GM12878 (cell line): ENCODE measurements at regions of chr13 and their contacts with region 1.

Region 1: DNA sequence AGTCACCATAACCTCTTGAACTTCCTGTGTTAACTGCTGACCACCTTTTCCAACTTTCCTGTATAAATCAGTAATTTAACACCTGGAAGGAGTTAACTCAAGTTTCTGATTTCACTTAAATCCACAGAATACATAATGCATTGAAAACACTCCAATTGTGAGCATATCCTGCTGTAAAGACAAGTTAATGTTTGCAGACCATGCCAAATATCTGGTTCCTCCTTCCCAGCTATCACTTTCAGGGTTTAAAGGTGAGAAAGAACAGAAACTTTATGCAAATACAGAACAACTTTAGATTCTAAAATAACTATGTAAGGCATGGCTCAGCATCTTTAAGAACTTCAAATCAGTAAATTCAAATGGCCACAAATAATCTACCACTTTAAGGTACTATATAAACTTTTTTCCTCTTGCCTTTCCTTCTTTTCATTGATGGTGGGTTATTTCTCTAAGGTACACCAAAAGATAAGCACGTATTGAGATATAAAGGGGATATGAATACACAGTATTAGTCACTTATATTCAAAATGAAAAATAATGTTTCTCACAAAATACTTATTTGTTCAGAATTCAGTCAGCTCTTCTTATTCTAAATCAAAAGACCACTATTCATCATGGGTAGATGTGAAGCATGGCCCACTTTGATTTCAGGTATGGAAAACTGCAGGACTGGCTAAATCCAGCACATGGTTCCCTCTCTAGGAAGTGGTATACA is 6.6 kb upstream of the TPTE2 start:
- DNase-seq: peak; percentile 67
- ATAC-seq: peak; percentile 71
- H3K4me3 ChIP-seq: peak overlapping the region; percentile 49; the same call in 1 of the 2 replicates
- H3K27ac ChIP-seq: peak overlapping the region; percentile 86
- H3K4me1 ChIP-seq: peaks cover 26% of the 10 kb centered on the region
- H3K27me3 ChIP-seq: no peaks in the 10 kb centered on the region
- CTCF ChIP-seq: no peak
- EP300 ChIP-seq: peak in 1 of 2 experiments; percentile 61; a peak in 1 of 4 replicates
- POLR2A ChIP-seq: no peak
- RAD21 ChIP-seq: no peak

Region 2: GRCh38 chr13:19587635-19588300 is 19.8 kb after region 1 on chr13:
- CTCF ChIA-PET with region 1: interaction called, 38 read pairs
- POLR2A ChIA-PET with region 1: interaction called, 3 read pairs
- RAD21 ChIA-PET with region 1: interaction called, 24 read pairs
- SMC1A ChIA-PET with region 1: interaction called, 51 read pairs
- in situ Hi-C with region 1: no loop called
- intact Hi-C with region 1: no loop called
- DNase-seq: no peak
- ATAC-seq: peak; percentile 89
- H3K4me3 ChIP-seq: peak overlapping the region; percentile 78; the same call in 1 of the 2 replicates
- H3K27ac ChIP-seq: peak overlapping the region; percentile 78
- H3K4me1 ChIP-seq: peaks cover 13% of the 10 kb centered on the region
- H3K27me3 ChIP-seq: no peaks in the 10 kb centered on the region
- CTCF ChIP-seq: peak; percentile 64 to 76 (median 64)
- EP300 ChIP-seq: no peak
- POLR2A ChIP-seq: no peak
- RAD21 ChIP-seq: peak; percentile 91

Region 3: GRCh38 chr13:19601749-19602725 is 34.1 kb after region 1 on chr13:
- CTCF ChIA-PET with region 1: no interaction called
- POLR2A ChIA-PET with region 1: interaction called, 6 read pairs
- RAD21 ChIA-PET with region 1: no interaction called
- SMC1A ChIA-PET with region 1: interaction called, 3 read pairs
- in situ Hi-C with region 1: no loop called
- intact Hi-C with region 1: loop called (anchors 2 kb)
- DNase-seq: no peak
- ATAC-seq: peak; percentile 95
- H3K4me3 ChIP-seq: peak overlapping the region; percentile 86
- H3K27ac ChIP-seq: peak overlapping the region; percentile 85
- H3K4me1 ChIP-seq: 0 out of 2 replicates have a peak, but pooled peaks cover 3% of the 10 kb centered on the region
- H3K27me3 ChIP-seq: no peaks in the 10 kb centered on the region
- CTCF ChIP-seq: peak; percentile 19 to 35 (median 25); a peak in 4 of 6 replicates
- EP300 ChIP-seq: no peak
- POLR2A ChIP-seq: peak; percentile 90
- RAD21 ChIP-seq: no peak

Region 4: DNA sequence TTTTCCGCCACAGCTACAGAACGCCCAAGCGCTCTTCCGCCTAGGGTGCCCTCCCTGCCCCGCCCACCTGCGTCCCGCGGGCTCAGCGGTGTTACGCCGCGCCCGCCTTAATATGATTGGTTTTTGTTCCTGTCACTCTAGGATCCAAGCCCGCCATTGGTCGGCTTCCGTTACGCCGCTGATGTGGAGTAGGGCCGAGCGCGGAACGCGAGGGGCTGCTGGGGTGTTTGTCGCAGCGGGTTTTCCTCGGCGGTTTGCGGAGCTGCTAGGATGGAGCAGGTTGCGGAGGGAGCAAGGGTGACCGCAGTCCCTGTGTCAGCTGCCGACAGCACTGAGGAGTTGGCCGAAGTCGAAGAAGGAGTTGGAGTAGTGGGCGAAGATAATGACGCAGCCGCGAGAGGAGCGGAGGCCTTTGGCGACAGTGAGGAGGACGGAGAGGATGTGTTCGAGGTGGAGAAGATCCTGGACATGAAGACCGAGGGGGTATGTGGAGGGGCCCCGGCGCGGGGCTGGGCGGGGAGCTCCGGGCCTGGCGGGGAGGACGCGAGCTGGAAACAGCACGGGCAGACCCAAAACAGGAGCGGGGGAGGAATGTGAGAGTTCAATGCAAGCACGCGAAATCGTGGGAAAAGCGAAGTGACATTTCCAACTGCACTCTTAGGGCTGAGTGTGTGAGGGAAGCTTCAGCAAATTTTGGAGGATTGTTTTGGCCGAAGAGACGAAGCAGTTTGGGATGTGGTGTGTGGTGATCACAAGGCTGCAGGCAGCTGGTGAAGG is 65.7 kb after region 1 on chr13 and contains the start of gene MPHOSPH8:
- CTCF ChIA-PET with region 1: interaction called, 3 read pairs
- POLR2A ChIA-PET with region 1: interaction called, 6 read pairs
- RAD21 ChIA-PET with region 1: interaction called, 11 read pairs
- SMC1A ChIA-PET with region 1: interaction called, 5 read pairs
- in situ Hi-C with region 1: no loop called
- intact Hi-C with region 1: no loop called
- DNase-seq: peak; percentile 84
- ATAC-seq: peak; percentile 98
- H3K4me3 ChIP-seq: peak within 1 kb of the TSS; percentile 97
- H3K27ac ChIP-seq: peak within 1 kb of the TSS; percentile 86
- H3K4me1 ChIP-seq: no peaks in the 10 kb centered on the region
- H3K27me3 ChIP-seq: no peaks in the 10 kb centered on the region
- CTCF ChIP-seq: no peak
- EP300 ChIP-seq: no peak
- POLR2A ChIP-seq: peak; percentile 83
- RAD21 ChIP-seq: no peak
- polyA plus RNA-seq, gene MPHOSPH8: 16.6 to 29.3 TPM

Region 5: DNA sequence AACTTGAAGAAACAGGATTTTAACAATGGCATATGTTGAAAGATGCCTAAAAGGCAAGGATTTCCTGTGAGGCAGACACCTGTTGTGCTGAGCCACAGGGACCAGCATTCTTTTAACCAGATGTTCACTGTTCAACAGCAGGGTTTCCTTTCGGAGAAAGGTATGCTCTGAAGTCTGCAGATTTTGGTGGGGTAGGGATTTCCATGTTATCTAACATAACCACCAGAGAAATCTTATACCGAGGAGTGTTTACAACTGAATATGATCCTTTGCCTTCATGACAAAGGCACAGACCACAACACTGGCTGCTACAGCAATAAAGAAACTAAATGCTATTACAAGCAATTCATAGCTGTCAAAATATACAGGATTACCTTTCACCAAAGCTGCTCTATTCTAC is 113.5 kb after region 1 on chr13:
- CTCF ChIA-PET with region 1: no interaction called
- POLR2A ChIA-PET with region 1: no interaction called
- RAD21 ChIA-PET with region 1: no interaction called
- SMC1A ChIA-PET with region 1: no interaction called
- in situ Hi-C with region 1: no loop called
- intact Hi-C with region 1: no loop called
- DNase-seq: no peak
- ATAC-seq: no peak
- H3K4me3 ChIP-seq: no peak overlapping the region
- H3K27ac ChIP-seq: no peak overlapping the region
- H3K4me1 ChIP-seq: no peaks in the 10 kb centered on the region
- H3K27me3 ChIP-seq: no peaks in the 10 kb centered on the region
- CTCF ChIP-seq: no peak
- EP300 ChIP-seq: no peak
- POLR2A ChIP-seq: no peak
- RAD21 ChIP-seq: no peak

Region 6: GRCh38 chr13:19852766-19853165 is 284.8 kb after region 1 on chr13:
- CTCF ChIA-PET with region 1: no interaction called
- POLR2A ChIA-PET with region 1: no interaction called
- RAD21 ChIA-PET with region 1: no interaction called
- SMC1A ChIA-PET with region 1: no interaction called
- in situ Hi-C with region 1: no loop called
- intact Hi-C with region 1: no loop called
- DNase-seq: no peak
- ATAC-seq: no peak
- H3K4me3 ChIP-seq: no peak overlapping the region
- H3K27ac ChIP-seq: no peak overlapping the region
- H3K4me1 ChIP-seq: no peaks in the 10 kb centered on the region
- H3K27me3 ChIP-seq: no peaks in the 10 kb centered on the region
- CTCF ChIP-seq: no peak
- EP300 ChIP-seq: no peak
- POLR2A ChIP-seq: no peak
- RAD21 ChIP-seq: no peak